B cell (primary cell): ENCODE measurements at regions of chr16 and their contacts with region 1.

Region 1: GRCh38 chr16:85610508-85611332 is 2.4 kb upstream of the GSE1 start:
- DNase-seq: peak; percentile 88
- ATAC-seq: peak; percentile 53
- H3K4me3 ChIP-seq: peak overlapping the region in 4 of 5 experiments; percentile 22 to 71 (median 64)
- H3K4me3 Mint-ChIP-seq: peak overlapping the region; percentile 90
- H3K27ac ChIP-seq: no peak overlapping the region
- H3K27ac Mint-ChIP-seq: peak overlapping the region; percentile 87
- H3K4me1 ChIP-seq: peaks cover 55 to 63% of the 10 kb centered on the region in 2 donors
- H3K4me1 Mint-ChIP-seq: peaks cover 59% of the 10 kb centered on the region
- H3K27me3 ChIP-seq: no peaks in the 10 kb centered on the region
- H3K27me3 Mint-ChIP-seq: no peaks in the 10 kb centered on the region
- CTCF ChIP-seq: peak; percentile 96

Region 2: GRCh38 chr16:85027349-85027957 is 583.3 kb before region 1 on chr16 and contains the start of gene KIAA0513:
- CTCF ChIA-PET with region 1: no interaction called
- POLR2A ChIA-PET with region 1: no interaction called
- intact Hi-C with region 1: no loop called
- DNase-seq: peak; percentile 96
- ATAC-seq: peak; percentile 92
- H3K4me3 ChIP-seq: peak within 1 kb of the TSS; percentile 57 to 84 (median 80)
- H3K4me3 Mint-ChIP-seq: peak within 1 kb of the TSS; percentile 94
- H3K27ac ChIP-seq: peak within 1 kb of the TSS; percentile 52 to 75
- H3K27ac Mint-ChIP-seq: peak within 1 kb of the TSS; percentile 89
- H3K4me1 ChIP-seq: peaks cover 28 to 33% of the 10 kb centered on the region in 2 donors
- H3K4me1 Mint-ChIP-seq: peaks cover 42% of the 10 kb centered on the region
- H3K27me3 ChIP-seq: peaks cover 0 to 6% (median 2%) of the 10 kb centered on the region in 4 experiments
- H3K27me3 Mint-ChIP-seq: peaks cover 13% of the 10 kb centered on the region
- CTCF ChIP-seq: no peak
- total RNA-seq, gene KIAA0513: 1.1 and 1.7 TPM in 2 replicates

Region 3: GRCh38 chr16:85393674-85394483 is 216.8 kb before region 1 on chr16:
- CTCF ChIA-PET with region 1: interaction called, 35 read pairs
- POLR2A ChIA-PET with region 1: no interaction called
- intact Hi-C with region 1: loop called (anchors 1 kb)
- DNase-seq: peak; percentile 77
- ATAC-seq: peak; percentile 73
- H3K4me3 ChIP-seq: no peak overlapping the region
- H3K4me3 Mint-ChIP-seq: no peak overlapping the region
- H3K27ac ChIP-seq: no peak overlapping the region
- H3K27ac Mint-ChIP-seq: no peak overlapping the region
- H3K4me1 ChIP-seq: no peaks in the 10 kb centered on the region
- H3K4me1 Mint-ChIP-seq: no peaks in the 10 kb centered on the region
- H3K27me3 ChIP-seq: peaks cover 0 to 3% (median under 1%) of the 10 kb centered on the region in 4 experiments
- H3K27me3 Mint-ChIP-seq: peaks cover 24% of the 10 kb centered on the region
- CTCF ChIP-seq: peak; percentile 87

Region 4: DNA sequence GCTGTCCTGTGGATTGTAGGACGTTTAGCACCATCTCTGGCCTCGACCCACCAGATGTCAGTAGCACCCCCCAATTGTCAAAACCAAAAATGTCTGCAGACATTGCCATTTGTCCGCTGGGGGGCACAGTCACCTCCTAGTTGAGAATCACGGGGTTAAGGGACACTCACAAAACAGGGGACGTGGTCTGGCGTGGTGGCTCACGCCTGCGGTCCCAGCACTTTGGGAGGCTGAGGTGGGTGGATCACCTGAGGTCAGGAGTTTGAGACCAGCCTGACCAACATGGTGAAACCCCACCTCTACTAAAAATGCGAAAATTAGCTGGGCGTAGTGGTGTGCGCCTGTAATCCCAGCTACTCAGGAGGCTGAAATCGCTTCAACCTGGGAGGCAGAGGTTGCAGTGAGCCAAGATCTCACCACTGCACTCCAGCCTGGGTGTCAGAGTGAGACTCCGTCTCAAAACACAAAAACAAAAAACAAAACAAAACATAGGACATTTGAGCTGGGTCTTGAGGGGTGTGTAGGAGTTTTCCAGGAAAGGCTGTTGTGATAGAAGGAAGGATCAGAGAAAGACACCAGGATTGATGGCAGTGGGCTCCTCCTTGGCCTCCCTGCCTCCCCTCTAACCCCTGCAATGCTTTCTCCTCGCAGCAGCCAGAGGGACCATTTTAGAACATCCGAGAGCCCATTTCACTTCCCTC is 169.4 kb before region 1 on chr16:
- CTCF ChIA-PET with region 1: interaction called, 5 read pairs
- POLR2A ChIA-PET with region 1: no interaction called
- intact Hi-C with region 1: loop called (anchors 1 kb)
- DNase-seq: no peak
- ATAC-seq: no peak
- H3K4me3 ChIP-seq: no peak overlapping the region
- H3K4me3 Mint-ChIP-seq: no peak overlapping the region
- H3K27ac ChIP-seq: no peak overlapping the region
- H3K27ac Mint-ChIP-seq: no peak overlapping the region
- H3K4me1 ChIP-seq: no peaks in the 10 kb centered on the region
- H3K4me1 Mint-ChIP-seq: no peaks in the 10 kb centered on the region
- H3K27me3 ChIP-seq: peaks cover 0 to 3% (median 0%) of the 10 kb centered on the region in 4 experiments
- H3K27me3 Mint-ChIP-seq: peaks cover 3% of the 10 kb centered on the region
- CTCF ChIP-seq: no peak

Region 5: GRCh38 chr16:85491058-85491771 is 119.5 kb before region 1 on chr16:
- CTCF ChIA-PET with region 1: interaction called, 18 read pairs
- POLR2A ChIA-PET with region 1: no interaction called
- intact Hi-C with region 1: loop called (anchors 2 kb)
- DNase-seq: peak; percentile 61
- ATAC-seq: no peak
- H3K4me3 ChIP-seq: no peak overlapping the region
- H3K4me3 Mint-ChIP-seq: no peak overlapping the region
- H3K27ac ChIP-seq: no peak overlapping the region
- H3K27ac Mint-ChIP-seq: no peak overlapping the region
- H3K4me1 ChIP-seq: no peaks in the 10 kb centered on the region
- H3K4me1 Mint-ChIP-seq: peaks cover 2% of the 10 kb centered on the region
- H3K27me3 ChIP-seq: peaks cover 0 to 16% (median 0%) of the 10 kb centered on the region in 4 experiments
- H3K27me3 Mint-ChIP-seq: peaks cover 24% of the 10 kb centered on the region
- CTCF ChIP-seq: peak; percentile 70

Region 6: DNA sequence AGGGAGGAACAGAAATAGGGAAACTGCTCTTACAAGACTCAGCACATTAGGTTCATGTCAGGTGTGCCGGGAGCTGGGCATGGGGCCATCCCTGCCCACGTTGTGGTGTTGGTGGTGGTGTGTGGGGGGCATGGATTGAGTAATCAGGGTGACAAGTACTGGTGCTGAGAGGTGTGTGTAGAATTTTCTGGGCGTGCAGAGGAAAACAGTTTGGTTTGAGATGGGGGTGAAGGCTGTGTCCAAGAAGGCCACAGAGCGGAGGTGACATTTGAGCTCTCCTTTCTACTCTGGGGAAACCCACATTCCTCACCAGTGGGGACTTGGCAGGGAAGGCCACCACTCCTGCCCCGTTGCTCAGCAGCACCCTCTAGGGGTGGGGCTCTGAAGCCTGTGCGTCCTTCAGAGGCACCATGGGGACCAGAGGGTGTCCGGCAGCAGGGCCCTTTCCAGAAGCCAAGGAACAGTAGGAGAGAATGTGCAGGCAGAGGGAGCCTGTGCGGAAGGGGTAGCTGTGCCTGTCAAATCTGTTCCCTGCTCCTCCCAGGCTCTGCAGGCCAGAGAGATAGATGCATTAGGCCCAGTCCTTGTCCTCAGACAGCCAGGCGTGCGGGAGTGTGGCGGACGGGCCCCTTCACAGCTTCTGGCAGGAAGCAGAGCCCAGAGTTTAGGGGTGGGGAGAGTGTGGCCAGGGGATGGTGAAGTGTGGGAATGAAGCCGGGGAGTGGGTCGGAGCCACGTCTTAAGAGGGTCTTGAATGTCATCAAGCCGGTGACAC is 46.3 kb before region 1 on chr16:
- CTCF ChIA-PET with region 1: interaction called, 10 read pairs
- POLR2A ChIA-PET with region 1: no interaction called
- intact Hi-C with region 1: no loop called
- DNase-seq: peak; percentile 49
- ATAC-seq: no peak
- H3K4me3 ChIP-seq: no peak overlapping the region
- H3K4me3 Mint-ChIP-seq: no peak overlapping the region
- H3K27ac ChIP-seq: no peak overlapping the region
- H3K27ac Mint-ChIP-seq: peak overlapping the region; percentile 89
- H3K4me1 ChIP-seq: peaks cover 5 to 13% of the 10 kb centered on the region in 2 donors
- H3K4me1 Mint-ChIP-seq: peaks cover 55% of the 10 kb centered on the region
- H3K27me3 ChIP-seq: no peaks in the 10 kb centered on the region
- H3K27me3 Mint-ChIP-seq: no peaks in the 10 kb centered on the region
- CTCF ChIP-seq: peak; percentile 59

Region 7: GRCh38 chr16:85759631-85760419 is 149.1 kb after region 1 on chr16:
- CTCF ChIA-PET with region 1: interaction called, 11 read pairs
- POLR2A ChIA-PET with region 1: interaction called, 9 read pairs
- intact Hi-C with region 1: loop called (anchors 2 kb)
- DNase-seq: peak; percentile 76
- ATAC-seq: no peak
- H3K4me3 ChIP-seq: peak overlapping the region in 4 of 5 experiments; percentile 8 to 49 (median 22)
- H3K4me3 Mint-ChIP-seq: peak overlapping the region; percentile 70
- H3K27ac ChIP-seq: peak overlapping the region; percentile 88 to 94
- H3K27ac Mint-ChIP-seq: peak overlapping the region; percentile 100
- H3K4me1 ChIP-seq: peaks cover 75 to 82% of the 10 kb centered on the region in 2 donors
- H3K4me1 Mint-ChIP-seq: peaks cover 61% of the 10 kb centered on the region
- H3K27me3 ChIP-seq: no peaks in the 10 kb centered on the region
- H3K27me3 Mint-ChIP-seq: no peaks in the 10 kb centered on the region
- CTCF ChIP-seq: peak; percentile 57